ENCODE measurements at regions of chr9 and their contacts with region 1.

Region 1: DNA sequence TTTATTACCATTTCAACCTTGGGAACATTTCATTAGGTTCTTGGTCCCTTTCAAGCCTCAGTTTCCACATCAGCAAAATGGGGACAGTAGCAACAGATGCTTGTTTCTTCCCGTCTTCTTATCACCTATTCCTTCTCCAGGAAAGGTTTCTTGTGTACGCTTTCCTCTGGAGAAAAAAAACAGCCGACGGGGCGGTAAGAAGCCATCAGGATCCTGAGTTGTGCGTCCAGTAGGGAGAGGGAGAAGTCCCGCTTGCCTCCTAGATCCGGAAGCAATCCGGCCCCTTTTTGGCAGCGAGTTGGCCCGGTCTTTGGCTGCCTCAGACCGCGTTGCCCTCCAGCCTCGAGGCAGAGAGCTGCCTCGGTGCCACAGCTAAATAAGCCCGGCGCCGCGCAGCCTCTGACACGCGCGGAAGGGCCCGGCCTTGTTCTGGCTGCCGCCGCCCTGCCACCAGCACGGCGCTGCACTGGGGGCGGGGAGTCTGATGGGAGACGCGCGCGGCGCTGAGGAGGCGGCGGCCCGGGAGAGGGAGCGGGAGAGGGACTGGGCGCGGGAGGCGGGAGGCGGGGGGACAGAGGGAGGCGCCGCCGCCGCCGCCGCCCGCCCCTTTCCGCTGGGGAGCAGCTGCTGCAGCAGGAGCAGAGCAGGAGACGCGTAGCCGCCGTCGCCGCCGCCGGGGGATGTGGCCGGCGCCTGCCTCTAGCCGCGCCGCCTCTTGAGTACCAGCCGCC is at the start of gene SLC44A1:
- DNase-seq: peak; percentile 84 to 99
- H3K4me3 ChIP-seq: peak within 1 kb of the TSS; percentile 97
- H3K27ac ChIP-seq: peak within 1 kb of the TSS; percentile 85
- H3K4me1 ChIP-seq: peaks cover 25% of the 10 kb centered on the region
- H3K27me3 ChIP-seq: no peaks in the 10 kb centered on the region
- CTCF ChIP-seq: no peak
- total RNA-seq, gene SLC44A1: 70.2 and 95.2 TPM in 2 replicates

Region 2: GRCh38 chr9:104895572-104895971 is 348.6 kb before region 1 on chr9:
- CTCF ChIA-PET with region 1: no interaction called
- POLR2A ChIA-PET with region 1: interaction called, 10 read pairs
- intact Hi-C with region 1: no loop called
- DNase-seq: no peak
- H3K4me3 ChIP-seq: no peak overlapping the region
- H3K27ac ChIP-seq: no peak overlapping the region
- H3K4me1 ChIP-seq: no peaks in the 10 kb centered on the region
- H3K27me3 ChIP-seq: no peaks in the 10 kb centered on the region
- CTCF ChIP-seq: no peak

Region 3: DNA sequence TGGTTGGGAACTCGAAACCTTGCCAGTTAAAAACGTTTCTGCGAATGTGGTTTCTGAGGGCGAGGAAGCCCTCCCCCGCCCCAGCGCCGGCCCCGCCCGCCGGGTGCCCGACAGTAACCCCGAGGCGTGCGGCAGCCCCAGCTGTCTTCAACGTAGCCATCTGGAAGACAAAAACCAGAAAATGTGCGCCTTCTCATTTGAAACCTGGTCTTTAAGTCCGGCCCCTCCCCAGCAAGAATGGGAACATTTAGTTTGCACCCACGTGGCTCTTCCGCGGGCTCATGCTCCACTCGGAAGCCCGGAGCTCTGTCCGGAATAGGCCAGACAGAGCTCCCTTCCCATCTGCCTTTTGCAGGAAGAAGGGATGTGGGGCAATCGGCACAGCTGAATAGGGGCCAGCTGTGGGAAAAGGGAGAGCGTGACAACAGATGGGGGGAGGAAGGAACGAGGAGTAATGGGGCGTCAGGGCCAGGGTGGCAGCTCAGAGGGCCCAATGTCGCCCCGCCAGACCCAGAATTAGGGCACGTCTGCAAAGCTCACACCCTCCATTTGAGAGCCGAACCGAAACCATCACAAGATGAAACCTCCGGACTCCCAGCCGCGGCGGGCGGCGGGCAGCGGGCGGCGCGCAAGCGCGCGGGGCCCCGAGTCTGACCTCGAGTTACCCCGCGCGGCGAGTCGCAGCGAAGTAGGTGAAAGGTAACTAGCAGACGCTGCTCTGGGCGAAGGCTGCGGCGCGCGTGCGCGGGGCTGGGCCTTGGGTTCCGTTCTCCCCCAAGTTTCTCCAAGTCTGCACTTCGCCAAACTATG is 252.8 kb before region 1 on chr9:
- CTCF ChIA-PET with region 1: interaction called, 10 read pairs
- POLR2A ChIA-PET with region 1: no interaction called
- intact Hi-C with region 1: loop called (anchors 5 kb)
- DNase-seq: peak; percentile 75 to 88
- H3K4me3 ChIP-seq: peak overlapping the region; percentile 84
- H3K27ac ChIP-seq: peak overlapping the region; percentile 99
- H3K4me1 ChIP-seq: peaks cover 52% of the 10 kb centered on the region
- H3K27me3 ChIP-seq: no peaks in the 10 kb centered on the region
- CTCF ChIP-seq: no peak

Region 4: GRCh38 chr9:105187778-105188177 is 56.4 kb before region 1 on chr9:
- CTCF ChIA-PET with region 1: no interaction called
- POLR2A ChIA-PET with region 1: interaction called, 3 read pairs
- intact Hi-C with region 1: loop called (anchors 2 kb)
- DNase-seq: peak; percentile 12 to 92
- H3K4me3 ChIP-seq: no peak overlapping the region
- H3K27ac ChIP-seq: peak overlapping the region; percentile 72
- H3K4me1 ChIP-seq: peaks cover 44% of the 10 kb centered on the region
- H3K27me3 ChIP-seq: no peaks in the 10 kb centered on the region
- CTCF ChIP-seq: no peak

Region 5: GRCh38 chr9:105355781-105356180 is 111.6 kb after region 1 on chr9:
- CTCF ChIA-PET with region 1: no interaction called
- POLR2A ChIA-PET with region 1: no interaction called
- intact Hi-C with region 1: loop called (anchors 10 kb)
- DNase-seq: no peak
- H3K4me3 ChIP-seq: no peak overlapping the region
- H3K27ac ChIP-seq: no peak overlapping the region
- H3K4me1 ChIP-seq: no peaks in the 10 kb centered on the region
- H3K27me3 ChIP-seq: no peaks in the 10 kb centered on the region
- CTCF ChIP-seq: no peak

Region 6: GRCh38 chr9:105881654-105882349 is 637.6 kb after region 1 on chr9:
- CTCF ChIA-PET with region 1: interaction called, 11 read pairs
- POLR2A ChIA-PET with region 1: no interaction called
- intact Hi-C with region 1: no loop called
- DNase-seq: peak; percentile 48 to 69
- H3K4me3 ChIP-seq: no peak overlapping the region
- H3K27ac ChIP-seq: no peak overlapping the region
- H3K4me1 ChIP-seq: no peaks in the 10 kb centered on the region
- H3K27me3 ChIP-seq: no peaks in the 10 kb centered on the region
- CTCF ChIP-seq: peak; percentile 96